ENCODE measurements at regions of chr11 and their contacts with region 1.

Region 1: DNA sequence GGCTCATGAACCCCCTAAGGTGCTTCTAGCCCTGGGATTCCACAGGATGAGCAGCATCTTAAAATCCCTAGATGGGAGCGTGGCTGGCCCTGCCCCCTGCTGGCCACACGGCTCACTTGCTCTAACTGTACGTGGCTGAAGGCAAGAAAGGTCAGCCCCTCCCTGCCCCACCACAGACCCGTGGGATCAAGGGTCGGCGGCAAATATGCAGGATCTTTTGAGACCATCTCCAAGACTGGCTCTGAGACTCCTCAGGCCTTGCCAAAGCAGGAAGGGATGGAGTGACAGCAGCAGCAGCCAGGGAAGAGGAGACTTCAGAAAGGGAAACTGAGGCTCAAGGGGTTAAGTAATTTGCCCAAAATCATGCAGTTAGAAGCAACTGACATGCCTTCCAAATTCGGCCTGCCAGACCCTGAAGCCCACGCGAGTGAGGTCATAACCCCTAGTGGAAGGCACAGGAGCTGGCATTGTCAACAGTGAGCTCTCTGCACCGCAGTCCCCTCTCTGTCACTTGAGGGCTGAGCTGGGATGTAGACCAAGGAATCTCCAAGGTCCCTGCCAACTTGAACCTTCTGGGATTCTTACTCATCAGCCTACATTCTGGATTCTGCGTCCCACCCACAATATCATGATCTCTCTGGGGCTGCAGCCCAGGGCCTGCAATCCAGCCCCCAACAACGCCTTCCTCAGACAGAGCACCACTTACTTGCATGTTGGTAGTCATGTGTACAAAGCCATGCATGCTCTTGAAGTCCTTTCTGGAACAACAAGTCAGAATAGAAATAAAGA is 31.4 kb downstream of the CREB3L1 start:
- DNase-seq: peak; percentile 81 to 94 (median 92)
- ATAC-seq: peak; percentile 83 to 86
- H3K4me3 ChIP-seq: no peak overlapping the region
- H3K27ac ChIP-seq: no peak overlapping the region
- H3K4me1 ChIP-seq: no peaks in the 10 kb centered on the region
- H3K27me3 ChIP-seq: no peaks in the 10 kb centered on the region

Region 2: GRCh38 chr11:45964911-45965389 is 343.9 kb before region 1 on chr11:
- intact Hi-C with region 1: loop called in 1 of 4 experiments (anchors 10 kb)
- DNase-seq: peak; percentile 37 to 67 (median 65)
- ATAC-seq: peak; percentile 85 to 89
- H3K4me3 ChIP-seq: no peak overlapping the region
- H3K27ac ChIP-seq: no peak overlapping the region
- H3K4me1 ChIP-seq: no peaks in the 10 kb centered on the region
- H3K27me3 ChIP-seq: no peaks in the 10 kb centered on the region

Region 3: DNA sequence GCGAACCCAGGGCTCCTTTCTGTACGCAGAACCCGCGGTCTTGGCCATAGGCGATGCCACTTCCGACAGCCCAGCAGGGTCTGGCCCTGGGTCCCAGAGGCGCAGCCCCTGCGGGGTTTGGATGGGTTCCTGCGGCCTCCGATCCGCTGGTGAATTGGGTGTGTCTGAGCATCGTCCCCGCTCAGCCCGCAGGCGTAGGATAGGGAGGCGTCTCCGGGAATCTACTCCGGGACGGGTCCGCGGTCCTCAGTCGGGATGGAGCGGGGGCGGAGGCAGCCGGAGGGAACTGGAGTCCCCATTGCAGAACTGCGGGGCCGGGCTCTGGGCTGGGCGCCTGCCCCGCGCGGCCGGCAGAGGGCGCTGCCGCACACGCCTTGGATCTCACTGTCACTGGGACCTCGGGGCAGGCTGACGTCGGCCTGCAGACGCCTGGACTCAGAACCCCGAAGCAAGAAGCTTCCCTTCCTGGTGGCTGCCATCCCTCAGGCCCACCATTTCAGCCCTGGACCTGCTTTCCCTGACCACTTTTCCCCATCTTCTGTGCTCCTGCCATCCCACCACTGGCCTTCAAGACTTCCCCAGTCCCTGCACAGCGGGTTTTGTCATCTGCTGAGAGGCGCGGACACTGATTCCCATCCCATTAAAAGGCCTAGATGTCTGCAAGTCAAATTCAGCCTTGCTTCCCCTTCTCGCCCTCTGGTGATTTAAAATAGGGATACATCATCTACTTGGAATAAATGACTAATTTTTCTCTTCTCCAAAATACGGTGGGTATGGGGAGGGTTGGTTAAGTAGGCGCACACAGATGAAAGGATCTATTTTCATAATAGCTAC is 69.6 kb before region 1 on chr11:
- intact Hi-C with region 1: loop called in 3 of 4 experiments (anchors 2 to 5 kb)
- DNase-seq: peak; percentile 86 to 96 (median 95)
- ATAC-seq: peak; percentile 87 to 89
- H3K4me3 ChIP-seq: peak overlapping the region; percentile 41
- H3K27ac ChIP-seq: peak overlapping the region; percentile 93
- H3K4me1 ChIP-seq: peaks cover 8% of the 10 kb centered on the region
- H3K27me3 ChIP-seq: no peaks in the 10 kb centered on the region

Region 4: DNA sequence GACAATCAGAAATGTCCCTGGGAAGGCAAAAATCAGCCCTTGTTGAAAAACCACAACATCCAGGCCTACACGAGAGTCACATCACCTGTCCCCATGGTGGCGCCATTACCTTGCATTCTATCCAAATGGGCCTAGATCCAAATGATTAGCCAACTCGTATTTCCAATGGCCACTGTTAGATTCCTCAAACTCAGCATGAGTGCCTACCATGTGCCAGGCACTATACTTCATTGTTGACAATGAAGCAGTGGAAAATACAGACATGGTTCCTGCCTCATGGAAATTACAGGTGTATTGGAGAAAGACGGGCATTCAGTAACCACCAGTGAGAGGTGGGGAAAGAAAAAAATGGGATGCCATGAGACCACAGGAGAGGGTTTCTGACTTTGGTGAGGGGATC is 61.2 kb before region 1 on chr11:
- intact Hi-C with region 1: loop called in 2 of 4 experiments (anchors 2 to 5 kb)
- DNase-seq: no peak
- ATAC-seq: no peak
- H3K4me3 ChIP-seq: no peak overlapping the region
- H3K27ac ChIP-seq: no peak overlapping the region
- H3K4me1 ChIP-seq: peaks cover 3% of the 10 kb centered on the region
- H3K27me3 ChIP-seq: no peaks in the 10 kb centered on the region

Region 5: DNA sequence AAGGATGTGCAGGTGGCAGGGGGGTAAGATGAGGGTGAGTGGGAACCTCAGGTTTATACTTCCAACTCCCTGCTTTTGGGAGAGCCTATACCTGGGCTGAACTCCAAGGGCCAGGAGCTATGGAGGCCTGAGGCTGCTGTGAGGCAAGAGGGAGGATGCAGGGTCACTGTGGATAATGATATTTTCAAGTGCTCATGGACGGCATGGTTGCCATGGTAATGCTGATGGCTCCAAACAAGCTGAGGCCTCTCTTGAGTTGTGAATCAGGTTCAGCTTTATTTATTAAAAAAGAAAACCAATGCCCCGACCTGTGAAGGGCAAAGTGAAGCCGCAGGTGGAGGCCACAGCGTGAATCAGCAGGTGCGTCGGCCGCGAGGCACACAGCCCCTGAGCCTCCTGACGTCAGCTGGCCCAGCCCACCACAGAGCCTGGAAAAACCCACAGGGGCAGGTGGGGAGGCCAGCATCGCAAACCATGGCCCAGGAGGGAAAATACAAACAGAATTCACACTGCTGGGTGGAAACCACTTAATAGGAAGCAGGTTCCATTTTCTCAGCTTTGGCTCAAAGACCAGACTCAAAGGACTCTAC is 48.8 kb before region 1 on chr11:
- intact Hi-C with region 1: no loop called
- DNase-seq: no peak
- ATAC-seq: no peak
- H3K4me3 ChIP-seq: no peak overlapping the region
- H3K27ac ChIP-seq: no peak overlapping the region
- H3K4me1 ChIP-seq: no peaks in the 10 kb centered on the region
- H3K27me3 ChIP-seq: no peaks in the 10 kb centered on the region